ENCODE measurements at regions of chr4 and their contacts with region 1.

Region 1: GRCh38 chr4:53702334-53703266 is 111.3 kb upstream of the LNX1 start:
- DNase-seq: peak; percentile 88
- ATAC-seq: peak; percentile 80
- H3K4me3 ChIP-seq: peak overlapping the region; percentile 45
- H3K27ac ChIP-seq: peak overlapping the region; percentile 64
- H3K4me1 ChIP-seq: peaks cover 49% of the 10 kb centered on the region
- H3K27me3 ChIP-seq: no peaks in the 10 kb centered on the region
- CTCF ChIP-seq: peak; percentile 32 to 37 (median 35); a peak in 4 of 6 replicates
- EP300 ChIP-seq: peak; percentile 63 to 80; a peak in 2 of 4 replicates
- POLR2A ChIP-seq: peak; percentile 60
- RAD21 ChIP-seq: peak; percentile 24; the same call in 1 of the 2 replicates

Region 2: GRCh38 chr4:53233114-53233795 is 469.3 kb before region 1 on chr4:
- CTCF ChIA-PET with region 1: no interaction called
- POLR2A ChIA-PET with region 1: no interaction called
- RAD21 ChIA-PET with region 1: interaction called, 10 read pairs
- SMC1A ChIA-PET with region 1: no interaction called
- in situ Hi-C with region 1: no loop called
- intact Hi-C with region 1: no loop called
- DNase-seq: no peak
- ATAC-seq: no peak
- H3K4me3 ChIP-seq: no peak overlapping the region
- H3K27ac ChIP-seq: no peak overlapping the region
- H3K4me1 ChIP-seq: peaks cover 7% of the 10 kb centered on the region; the same call in 1 of the 2 replicates
- H3K27me3 ChIP-seq: no peaks in the 10 kb centered on the region
- CTCF ChIP-seq: no peak
- EP300 ChIP-seq: no peak
- POLR2A ChIP-seq: no peak
- RAD21 ChIP-seq: no peak

Region 3: GRCh38 chr4:53640576-53641453 is 61.8 kb before region 1 on chr4:
- CTCF ChIA-PET with region 1: interaction called, 71 read pairs
- POLR2A ChIA-PET with region 1: interaction called, 46 read pairs
- RAD21 ChIA-PET with region 1: interaction called, 132 read pairs
- SMC1A ChIA-PET with region 1: interaction called, 92 read pairs
- in situ Hi-C with region 1: loop called (anchors 10 kb)
- intact Hi-C with region 1: loop called (anchors 2 kb)
- DNase-seq: peak; percentile 76
- ATAC-seq: peak; percentile 89
- H3K4me3 ChIP-seq: no peak overlapping the region
- H3K27ac ChIP-seq: peak overlapping the region; percentile 68
- H3K4me1 ChIP-seq: peaks cover 19% of the 10 kb centered on the region; the same call in 1 of the 2 replicates
- H3K27me3 ChIP-seq: no peaks in the 10 kb centered on the region
- CTCF ChIP-seq: no peak
- EP300 ChIP-seq: peak in 1 of 2 experiments; percentile 27; a peak in 1 of 4 replicates
- POLR2A ChIP-seq: no peak
- RAD21 ChIP-seq: no peak

Region 4: GRCh38 chr4:53688186-53688790 is 14.3 kb before region 1 on chr4:
- CTCF ChIA-PET with region 1: interaction called, 39 read pairs
- POLR2A ChIA-PET with region 1: interaction called, 11 read pairs
- RAD21 ChIA-PET with region 1: interaction called, 31 read pairs
- SMC1A ChIA-PET with region 1: interaction called, 145 read pairs
- in situ Hi-C with region 1: no loop called
- intact Hi-C with region 1: no loop called
- DNase-seq: peak; percentile 76
- ATAC-seq: peak; percentile 88
- H3K4me3 ChIP-seq: no peak overlapping the region
- H3K27ac ChIP-seq: peak overlapping the region; percentile 1; the same call in 1 of the 2 replicates
- H3K4me1 ChIP-seq: peaks cover 4% of the 10 kb centered on the region; the same call in 1 of the 2 replicates
- H3K27me3 ChIP-seq: no peaks in the 10 kb centered on the region
- CTCF ChIP-seq: no peak
- EP300 ChIP-seq: peak in 1 of 2 experiments; percentile 49; a peak in 1 of 4 replicates
- POLR2A ChIP-seq: no peak
- RAD21 ChIP-seq: no peak

Region 5: DNA sequence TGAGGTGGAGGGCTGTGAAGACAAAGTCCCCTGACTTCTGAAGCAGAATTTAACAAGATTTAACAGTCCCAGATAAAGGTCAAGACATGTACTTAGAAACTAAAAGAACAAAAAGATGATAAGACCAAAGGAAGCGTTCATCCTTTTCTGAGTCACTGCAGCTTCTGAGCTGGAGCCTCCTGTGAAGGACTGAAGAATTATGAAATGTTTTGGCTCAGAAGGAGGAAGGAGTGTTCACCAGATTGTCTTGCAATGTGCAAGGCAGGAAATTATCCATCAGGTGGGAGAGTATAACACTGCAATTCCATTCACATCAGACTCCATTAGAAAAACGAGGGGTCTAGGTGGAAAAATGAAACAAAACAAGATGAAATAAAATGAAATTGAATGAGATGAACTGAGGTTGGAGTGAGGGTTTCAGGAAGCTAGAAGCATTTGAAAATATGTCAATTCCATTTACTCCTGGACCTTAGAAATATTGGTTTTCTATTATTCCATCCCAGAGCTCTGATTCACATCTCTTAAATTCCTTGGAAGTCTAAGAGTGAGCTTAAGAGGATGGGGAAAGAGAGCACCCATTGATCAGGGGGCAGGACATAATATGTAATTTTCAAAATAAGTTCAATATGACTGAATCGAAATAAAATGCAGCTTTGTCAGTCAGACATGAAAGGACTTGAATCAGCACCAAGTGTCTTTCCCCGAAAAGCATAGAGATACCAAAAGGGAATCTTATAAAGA is 74.8 kb after region 1 on chr4:
- CTCF ChIA-PET with region 1: interaction called, 19 read pairs
- POLR2A ChIA-PET with region 1: no interaction called
- RAD21 ChIA-PET with region 1: interaction called, 4 read pairs
- SMC1A ChIA-PET with region 1: interaction called, 5 read pairs
- in situ Hi-C with region 1: no loop called
- intact Hi-C with region 1: no loop called
- DNase-seq: no peak
- ATAC-seq: no peak
- H3K4me3 ChIP-seq: no peak overlapping the region
- H3K27ac ChIP-seq: no peak overlapping the region
- H3K4me1 ChIP-seq: no peaks in the 10 kb centered on the region
- H3K27me3 ChIP-seq: no peaks in the 10 kb centered on the region
- CTCF ChIP-seq: no peak
- EP300 ChIP-seq: no peak
- POLR2A ChIP-seq: no peak
- RAD21 ChIP-seq: no peak

Region 6: DNA sequence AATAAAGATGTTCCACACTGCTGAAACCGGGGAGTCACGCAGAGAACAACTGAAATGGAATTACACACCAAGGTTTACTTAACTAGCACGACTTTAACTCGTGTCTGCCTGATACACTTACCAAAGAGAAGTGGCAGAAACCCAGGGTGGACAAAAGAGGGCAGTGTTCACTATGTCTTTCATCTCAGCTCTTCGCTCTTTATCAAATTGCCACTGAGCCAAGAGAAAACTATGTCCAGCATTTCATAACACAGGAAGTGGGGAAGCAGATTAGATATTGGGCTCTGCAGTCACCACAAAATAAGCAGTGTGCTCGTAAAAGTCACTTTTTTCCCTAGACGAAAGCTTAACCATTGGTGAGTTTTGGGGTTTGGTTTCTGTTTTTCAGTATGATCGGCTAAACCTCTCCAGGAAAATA is 206.1 kb after region 1 on chr4:
- CTCF ChIA-PET with region 1: interaction called, 23 read pairs
- POLR2A ChIA-PET with region 1: no interaction called
- RAD21 ChIA-PET with region 1: interaction called, 12 read pairs
- SMC1A ChIA-PET with region 1: interaction called, 5 read pairs
- in situ Hi-C with region 1: no loop called
- intact Hi-C with region 1: loop called (anchors 5 kb)
- DNase-seq: peak; percentile 8
- ATAC-seq: peak; percentile 83
- H3K4me3 ChIP-seq: no peak overlapping the region
- H3K27ac ChIP-seq: no peak overlapping the region
- H3K4me1 ChIP-seq: no peaks in the 10 kb centered on the region
- H3K27me3 ChIP-seq: peaks cover 0 to 3% of the 10 kb centered on the region in 2 experiments; a peak in 1 of 4 replicates
- CTCF ChIP-seq: peak; percentile 58 to 71 (median 59); a peak in 5 of 6 replicates
- EP300 ChIP-seq: no peak
- POLR2A ChIP-seq: no peak
- RAD21 ChIP-seq: peak; percentile 60

Region 7: GRCh38 chr4:54233277-54233696 is 530.7 kb after region 1 on chr4:
- CTCF ChIA-PET with region 1: interaction called, 10 read pairs
- POLR2A ChIA-PET with region 1: no interaction called
- RAD21 ChIA-PET with region 1: interaction called, 5 read pairs
- SMC1A ChIA-PET with region 1: interaction called, 4 read pairs
- in situ Hi-C with region 1: loop called (anchors 5 kb)
- intact Hi-C with region 1: loop called (anchors 5 kb)
- DNase-seq: no peak
- ATAC-seq: peak; percentile 97
- H3K4me3 ChIP-seq: peak overlapping the region; percentile 63; the same call in 1 of the 2 replicates
- H3K27ac ChIP-seq: no peak overlapping the region
- H3K4me1 ChIP-seq: 0 out of 2 replicates have a peak, but pooled peaks cover 7% of the 10 kb centered on the region
- H3K27me3 ChIP-seq: peaks cover 18 to 22% of the 10 kb centered on the region in 2 experiments
- CTCF ChIP-seq: peak; percentile 74 to 84 (median 83)
- EP300 ChIP-seq: no peak
- POLR2A ChIP-seq: no peak
- RAD21 ChIP-seq: peak; percentile 73

Measured in GM12878 (cell line).